A549 (cell line): ENCODE measurements at regions of chr15 and their contacts with region 1.

Region 1: DNA sequence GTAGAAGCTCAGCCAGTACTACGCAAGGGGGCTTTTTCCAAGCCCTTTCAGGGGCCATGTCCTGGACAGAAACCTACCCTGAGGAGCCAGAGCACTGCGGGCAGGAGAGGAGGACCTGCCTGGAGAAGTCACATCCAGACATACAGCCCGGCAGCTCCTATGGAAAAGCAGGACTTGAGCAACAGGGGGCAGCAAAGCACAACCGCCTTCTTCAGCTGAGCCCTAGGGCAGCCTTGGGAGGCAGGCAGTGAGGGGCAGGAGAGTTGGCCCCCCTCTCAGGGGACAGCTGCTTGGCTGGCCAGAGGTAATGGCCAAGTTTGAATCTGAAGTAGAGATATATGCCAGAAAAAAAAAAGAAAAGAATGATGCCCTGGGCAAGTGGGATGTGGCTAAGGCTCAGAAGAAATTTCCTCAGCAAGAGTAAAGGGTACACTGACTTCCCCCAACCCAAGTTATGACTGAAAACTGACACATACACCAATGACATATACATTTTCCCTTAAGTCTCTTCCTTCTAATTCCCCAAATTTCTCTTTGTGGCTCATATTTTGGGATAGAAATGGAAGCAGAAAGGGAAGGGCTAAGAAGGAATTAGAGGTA is 56.9 kb downstream of the CYP19A1 start:
- DNase-seq: peak; percentile 60 to 65
- ATAC-seq: peak; percentile 94 to 99; a peak in 5 of 6 replicates
- H3K4me3 ChIP-seq: no peak overlapping the region
- H3K27ac ChIP-seq: no peak overlapping the region
- H3K4me1 ChIP-seq: no peaks in the 10 kb centered on the region
- CTCF ChIP-seq: peak; percentile 70
- EP300 ChIP-seq: no peak
- POLR2A ChIP-seq: no peak
- RAD21 ChIP-seq: peak; percentile 80 to 85

Region 2: GRCh38 chr15:51203797-51204196 is 77.7 kb before region 1 on chr15:
- CTCF ChIA-PET with region 1: interaction called, 10 read pairs
- POLR2A ChIA-PET with region 1: no interaction called
- DNase-seq: peak in 1 of 2 experiments; percentile 19
- ATAC-seq: peak; percentile 51 to 66; a peak in 5 of 6 replicates
- H3K4me3 ChIP-seq: no peak overlapping the region
- H3K27ac ChIP-seq: no peak overlapping the region
- H3K4me1 ChIP-seq: 0 out of 3 replicates have a peak, but pooled peaks cover 12% of the 10 kb centered on the region
- CTCF ChIP-seq: no peak
- EP300 ChIP-seq: no peak
- POLR2A ChIP-seq: no peak
- RAD21 ChIP-seq: no peak

Region 3: GRCh38 chr15:51253366-51253765 is 28.1 kb before region 1 on chr15:
- CTCF ChIA-PET with region 1: interaction called, 10 read pairs
- POLR2A ChIA-PET with region 1: no interaction called
- DNase-seq: no peak
- ATAC-seq: no peak
- H3K4me3 ChIP-seq: no peak overlapping the region
- H3K27ac ChIP-seq: no peak overlapping the region
- H3K4me1 ChIP-seq: no peaks in the 10 kb centered on the region
- CTCF ChIP-seq: no peak
- EP300 ChIP-seq: no peak
- POLR2A ChIP-seq: no peak
- RAD21 ChIP-seq: no peak

Region 4: DNA sequence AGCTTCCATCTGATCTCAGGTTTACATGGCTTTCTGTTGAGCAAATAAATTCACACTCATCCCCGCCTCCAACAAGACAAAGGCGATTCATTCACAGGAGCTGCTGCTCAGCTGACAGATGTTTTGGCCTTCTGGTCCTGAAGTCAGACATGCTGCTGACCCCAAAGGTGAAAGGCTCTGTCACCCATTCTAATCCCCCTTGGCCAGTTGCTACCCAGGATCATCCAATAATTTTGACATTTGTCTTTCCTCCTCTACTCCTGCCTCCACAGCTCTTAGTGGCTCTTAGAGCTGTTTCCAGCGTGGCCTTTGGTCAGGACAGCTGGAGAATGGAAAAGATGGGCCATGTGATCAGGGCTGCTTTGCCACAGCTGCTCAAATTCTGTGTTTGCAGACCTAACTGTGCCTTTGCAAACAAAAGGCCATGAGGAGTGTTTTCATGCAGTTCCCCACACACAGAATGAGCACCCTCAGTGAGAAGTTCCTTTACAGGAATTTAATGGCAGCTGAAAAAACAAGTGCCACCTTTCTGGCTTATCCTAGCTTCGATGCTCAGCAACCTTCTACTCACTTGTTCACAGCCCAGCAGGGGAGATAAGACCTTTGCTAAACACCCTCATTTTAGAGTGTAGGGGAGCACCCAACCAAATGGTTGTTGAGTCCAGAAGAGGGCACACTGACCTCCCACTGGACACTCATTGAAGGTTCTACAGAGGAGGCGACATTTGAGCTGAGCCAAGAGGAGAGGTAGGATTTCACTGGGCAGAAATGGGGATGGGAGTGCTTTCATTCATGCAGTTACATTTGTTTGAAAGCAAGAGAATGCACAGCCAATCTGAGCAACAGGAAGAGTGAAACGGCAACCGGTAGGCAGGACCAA is 18.0 kb after region 1 on chr15:
- CTCF ChIA-PET with region 1: interaction called, 81 read pairs
- POLR2A ChIA-PET with region 1: no interaction called
- DNase-seq: no peak
- ATAC-seq: no peak
- H3K4me3 ChIP-seq: no peak overlapping the region
- H3K27ac ChIP-seq: no peak overlapping the region
- H3K4me1 ChIP-seq: no peaks in the 10 kb centered on the region
- CTCF ChIP-seq: no peak
- EP300 ChIP-seq: no peak
- POLR2A ChIP-seq: no peak
- RAD21 ChIP-seq: no peak

Region 5: DNA sequence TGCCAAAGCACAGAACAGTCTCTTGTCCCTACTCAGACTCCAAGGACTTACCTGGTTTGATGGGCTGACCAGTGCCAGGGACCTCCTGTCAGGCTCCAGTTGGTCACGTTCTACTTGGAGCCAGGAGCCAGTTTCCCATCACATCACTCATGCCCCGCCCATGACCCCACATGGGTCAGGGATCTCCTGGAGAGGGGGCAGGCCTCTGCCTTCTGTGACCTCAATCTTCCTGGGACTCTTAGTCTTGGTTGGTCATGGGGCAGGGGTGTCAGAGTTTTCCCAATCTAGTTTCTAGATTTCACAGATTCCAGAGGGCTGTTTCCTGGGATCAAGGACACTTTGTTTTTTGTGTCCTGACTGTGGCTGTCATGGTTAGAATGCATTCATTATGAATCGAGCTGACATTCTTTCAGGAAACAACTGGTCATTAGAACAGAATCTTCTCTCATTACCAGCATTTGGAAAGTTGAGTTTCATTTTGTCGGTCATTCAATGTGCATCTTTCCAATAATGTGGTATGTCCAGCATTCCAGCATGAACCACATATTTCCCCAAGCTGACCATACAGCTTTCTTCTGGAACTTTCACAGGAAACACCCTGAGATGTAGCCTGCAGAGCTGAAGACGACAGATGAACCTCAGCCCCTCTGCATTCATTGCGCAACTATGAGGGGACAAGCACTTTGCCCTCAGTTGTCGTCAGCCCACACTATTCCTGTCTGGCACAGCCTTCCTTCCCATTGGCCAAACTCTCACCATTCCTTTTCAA is 37.1 kb after region 1 on chr15:
- CTCF ChIA-PET with region 1: interaction called, 14 read pairs
- POLR2A ChIA-PET with region 1: no interaction called
- DNase-seq: no peak
- ATAC-seq: no peak
- H3K4me3 ChIP-seq: no peak overlapping the region
- H3K27ac ChIP-seq: no peak overlapping the region
- H3K4me1 ChIP-seq: no peaks in the 10 kb centered on the region
- CTCF ChIP-seq: no peak
- EP300 ChIP-seq: no peak
- POLR2A ChIP-seq: no peak
- RAD21 ChIP-seq: no peak